Activated CD4-positive, alpha-beta memory T cell treated with anti-CD3 and anti-CD28 coated beads, Interleukin-2, amount 10 ng/mL, durations not matched to agents 7 days and 5 days (primary cell): ENCODE measurements at regions of chr9 and their contacts with region 1.

Region 1: GRCh38 chr9:130701056-130702022 is 7.8 kb downstream of the EXOSC2 start:
- DNase-seq: peak; percentile 72
- H3K4me3 Mint-ChIP-seq: no peak overlapping the region
- H3K27ac Mint-ChIP-seq: no peak overlapping the region
- H3K4me1 Mint-ChIP-seq: peaks cover 22% of the 10 kb centered on the region
- H3K27me3 Mint-ChIP-seq: no peaks in the 10 kb centered on the region

Region 2: DNA sequence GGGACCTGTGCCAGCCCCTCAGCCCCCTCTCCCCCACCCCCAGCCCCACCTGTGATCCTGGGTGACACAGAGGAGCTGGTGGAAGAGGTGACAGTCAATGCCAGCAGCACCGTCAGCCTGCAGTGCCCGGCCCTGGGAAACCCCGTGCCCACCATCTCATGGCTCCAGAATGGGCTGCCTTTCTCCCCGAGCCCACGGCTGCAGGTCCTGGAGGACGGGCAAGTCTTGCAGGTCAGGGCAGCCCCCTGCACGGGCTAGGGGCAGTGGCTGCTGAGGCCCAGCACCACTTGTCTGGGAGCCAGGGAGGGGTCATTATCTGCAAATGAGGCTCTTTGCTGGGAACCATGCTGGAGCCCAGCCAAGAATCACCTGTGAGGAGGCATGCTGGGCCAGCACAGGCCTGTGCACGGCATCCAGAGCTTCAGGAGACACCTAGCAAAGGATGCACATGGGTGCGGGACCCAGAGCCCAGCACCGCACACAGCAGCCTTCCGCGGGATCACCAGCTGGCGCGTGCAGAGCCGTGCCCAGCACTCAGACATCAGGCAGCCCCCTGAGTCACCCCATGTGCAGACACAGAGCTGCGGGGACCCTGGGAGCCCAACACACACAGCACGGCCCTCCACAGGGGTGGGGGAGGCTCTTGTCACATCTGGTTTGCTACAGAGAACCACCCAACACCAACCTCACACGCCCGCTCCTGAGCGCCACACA is 318.5 kb before region 1 on chr9:
- CTCF ChIA-PET with region 1: no interaction called
- POLR2A ChIA-PET with region 1: no interaction called
- DNase-seq: no peak
- H3K4me3 Mint-ChIP-seq: no peak overlapping the region
- H3K27ac Mint-ChIP-seq: no peak overlapping the region
- H3K4me1 Mint-ChIP-seq: no peaks in the 10 kb centered on the region
- H3K27me3 Mint-ChIP-seq: no peaks in the 10 kb centered on the region

Region 3: DNA sequence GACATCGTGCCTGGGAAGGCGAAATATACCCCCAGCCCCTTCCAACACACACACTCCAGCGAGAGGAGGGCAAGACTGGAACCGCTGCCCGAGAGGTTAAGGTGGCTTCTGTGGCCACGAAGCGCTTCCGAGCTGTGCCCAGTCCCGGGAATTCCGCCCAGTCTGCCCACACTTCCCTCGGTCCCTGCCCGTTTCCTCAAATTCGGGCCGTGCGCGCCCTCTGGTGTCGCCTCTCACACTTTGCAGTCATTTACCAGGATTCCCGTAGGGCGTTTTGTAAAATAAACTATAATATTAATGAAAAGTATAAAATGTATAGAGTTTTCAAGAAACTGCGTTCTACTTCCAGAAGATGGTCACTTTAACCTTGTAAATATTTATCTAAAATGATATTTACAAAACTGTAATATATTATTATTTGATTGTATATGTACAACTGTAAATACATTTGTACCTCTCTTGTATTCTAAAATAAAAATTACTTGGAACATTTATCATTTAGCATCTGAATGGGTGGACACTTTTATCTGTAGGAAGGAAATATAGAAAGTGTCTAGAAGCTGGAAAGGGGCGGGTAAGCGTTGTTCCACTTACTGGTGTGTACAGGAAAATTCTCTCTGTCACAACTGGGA is 18.7 kb before region 1 on chr9:
- CTCF ChIA-PET with region 1: interaction called, 12 read pairs
- POLR2A ChIA-PET with region 1: no interaction called
- DNase-seq: peak; percentile 60
- H3K4me3 Mint-ChIP-seq: peak overlapping the region; percentile 82
- H3K27ac Mint-ChIP-seq: no peak overlapping the region
- H3K4me1 Mint-ChIP-seq: peaks cover 9% of the 10 kb centered on the region
- H3K27me3 Mint-ChIP-seq: peaks cover 21% of the 10 kb centered on the region

Region 4: DNA sequence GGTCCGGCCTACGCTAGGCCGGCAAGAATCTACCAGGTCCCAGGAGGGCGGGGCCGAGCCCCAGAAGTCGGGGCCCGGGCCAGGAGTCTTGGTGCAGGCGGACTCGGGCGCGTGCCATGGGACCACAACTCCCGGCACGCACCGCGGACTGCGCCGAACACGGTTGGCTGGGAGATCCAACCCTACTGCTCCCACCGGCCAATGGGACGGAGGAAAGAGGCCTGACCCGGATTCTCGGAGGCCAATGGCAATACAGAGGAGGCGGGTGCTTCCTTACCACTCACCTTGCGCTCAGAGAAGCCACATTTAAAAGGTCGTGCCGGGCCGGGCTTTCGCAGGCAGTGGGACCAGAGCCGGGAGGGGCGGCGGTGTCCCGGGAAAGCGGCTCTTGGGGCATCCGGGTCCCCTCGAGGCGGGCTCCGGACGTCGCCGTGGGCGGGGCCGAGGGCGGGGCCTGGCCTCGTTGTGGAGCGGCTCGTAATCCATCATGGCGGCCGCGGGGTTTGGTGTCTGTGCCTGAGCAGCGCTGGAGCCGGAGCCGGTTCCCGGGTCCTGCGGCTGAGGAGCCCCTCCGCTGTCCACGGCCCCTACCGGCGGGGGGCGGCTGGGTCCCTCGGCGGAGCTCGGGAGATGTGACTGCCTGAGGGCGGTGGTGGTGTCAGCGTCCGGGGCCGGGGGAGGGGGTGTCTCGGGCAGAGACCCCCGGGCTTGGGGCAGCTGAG is 11.4 kb after region 1 on chr9:
- CTCF ChIA-PET with region 1: interaction called, 25 read pairs
- POLR2A ChIA-PET with region 1: interaction called, 48 read pairs
- DNase-seq: peak; percentile 97
- H3K4me3 Mint-ChIP-seq: peak overlapping the region; percentile 86
- H3K27ac Mint-ChIP-seq: peak overlapping the region; percentile 90
- H3K4me1 Mint-ChIP-seq: peaks cover 39% of the 10 kb centered on the region
- H3K27me3 Mint-ChIP-seq: no peaks in the 10 kb centered on the region

Region 5: DNA sequence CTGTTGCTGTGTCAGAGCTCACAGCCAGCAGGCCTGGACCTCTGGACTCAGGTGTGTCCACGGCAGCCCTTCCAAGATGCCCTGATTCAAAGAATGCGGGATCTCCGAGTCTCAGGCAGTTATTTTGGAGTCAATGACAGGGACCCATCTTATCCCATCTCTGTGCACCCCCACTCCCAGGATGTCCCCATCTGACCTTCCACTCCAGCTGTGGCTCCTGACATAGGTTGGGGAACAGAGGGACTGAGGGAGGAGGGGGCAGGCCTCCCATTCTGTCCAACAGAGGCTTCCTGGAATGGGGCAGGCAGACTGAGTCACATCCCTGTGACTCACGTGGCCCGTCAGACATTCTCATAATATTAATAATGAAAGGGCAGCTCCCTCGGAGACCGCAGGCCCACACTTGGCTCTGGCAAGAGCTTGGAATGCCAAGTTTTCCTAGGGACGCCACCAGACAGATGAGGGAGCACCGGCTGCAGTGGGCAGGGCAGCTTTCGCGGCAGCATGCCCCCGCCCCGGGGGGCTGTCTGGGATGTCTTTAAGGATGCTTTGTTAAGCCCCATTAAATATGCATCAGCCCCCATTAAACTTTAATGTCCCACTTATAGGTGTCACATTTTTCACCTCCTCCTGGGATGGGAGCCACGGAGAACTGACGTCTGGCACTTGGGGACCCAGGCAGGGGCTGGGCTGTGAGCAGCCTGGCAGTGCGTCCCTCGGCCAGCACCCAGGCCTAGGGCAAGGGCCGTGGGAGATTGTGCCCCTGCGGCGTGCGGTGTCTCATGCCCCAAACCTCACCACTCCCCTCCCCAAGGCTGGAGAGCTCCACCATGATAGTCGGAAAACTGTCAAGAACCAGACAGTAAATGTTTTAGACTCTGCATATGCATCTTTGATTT is 261.3 kb after region 1 on chr9:
- CTCF ChIA-PET with region 1: no interaction called
- POLR2A ChIA-PET with region 1: no interaction called
- DNase-seq: no peak
- H3K4me3 Mint-ChIP-seq: no peak overlapping the region
- H3K27ac Mint-ChIP-seq: no peak overlapping the region
- H3K4me1 Mint-ChIP-seq: peaks cover 6% of the 10 kb centered on the region
- H3K27me3 Mint-ChIP-seq: no peaks in the 10 kb centered on the region